H1 (cell line): ENCODE measurements at regions of chr2 and their contacts with region 1.

Region 1: GRCh38 chr2:96116879-96117697 is 717 bp upstream of the ADRA2B start:
- DNase-seq: no peak
- H3K4me3 ChIP-seq: peak overlapping the region; percentile 57 to 81 (median 60)
- H3K27ac ChIP-seq: no peak overlapping the region; the same call in 1 of the 2 replicates
- H3K4me1 ChIP-seq: peaks cover 0 to 20% (median 12%) of the 10 kb centered on the region in 4 experiments; a peak in 6 of 7 replicates
- H3K27me3 ChIP-seq: peaks cover 0 to 32% (median 25%) of the 10 kb centered on the region in 4 experiments; a peak in 5 of 7 replicates
- CTCF ChIP-seq: peak in 2 of 3 experiments; percentile 81 to 95; a peak in 3 of 4 replicates
- EP300 ChIP-seq: no peak
- POLR2A ChIP-seq: no peak
- RAD21 ChIP-seq: peak; percentile 57 to 86

Region 2: GRCh38 chr2:96024336-96025193 is 92.5 kb before region 1 on chr2:
- CTCF ChIA-PET with region 1: interaction called, 22 read pairs
- POLR2A ChIA-PET with region 1: no interaction called
- DNase-seq: no peak
- H3K4me3 ChIP-seq: no peak overlapping the region
- H3K27ac ChIP-seq: no peak overlapping the region
- H3K4me1 ChIP-seq: no peaks in the 10 kb centered on the region
- H3K27me3 ChIP-seq: no peaks in the 10 kb centered on the region
- CTCF ChIP-seq: peak in 2 of 3 experiments; percentile 19 to 20; a peak in 3 of 4 replicates
- EP300 ChIP-seq: no peak
- POLR2A ChIP-seq: no peak
- RAD21 ChIP-seq: 0 out of 4 replicates have a peak, but pooled peaks of 1 of the 2 experiments have one; percentile 7

Region 3: DNA sequence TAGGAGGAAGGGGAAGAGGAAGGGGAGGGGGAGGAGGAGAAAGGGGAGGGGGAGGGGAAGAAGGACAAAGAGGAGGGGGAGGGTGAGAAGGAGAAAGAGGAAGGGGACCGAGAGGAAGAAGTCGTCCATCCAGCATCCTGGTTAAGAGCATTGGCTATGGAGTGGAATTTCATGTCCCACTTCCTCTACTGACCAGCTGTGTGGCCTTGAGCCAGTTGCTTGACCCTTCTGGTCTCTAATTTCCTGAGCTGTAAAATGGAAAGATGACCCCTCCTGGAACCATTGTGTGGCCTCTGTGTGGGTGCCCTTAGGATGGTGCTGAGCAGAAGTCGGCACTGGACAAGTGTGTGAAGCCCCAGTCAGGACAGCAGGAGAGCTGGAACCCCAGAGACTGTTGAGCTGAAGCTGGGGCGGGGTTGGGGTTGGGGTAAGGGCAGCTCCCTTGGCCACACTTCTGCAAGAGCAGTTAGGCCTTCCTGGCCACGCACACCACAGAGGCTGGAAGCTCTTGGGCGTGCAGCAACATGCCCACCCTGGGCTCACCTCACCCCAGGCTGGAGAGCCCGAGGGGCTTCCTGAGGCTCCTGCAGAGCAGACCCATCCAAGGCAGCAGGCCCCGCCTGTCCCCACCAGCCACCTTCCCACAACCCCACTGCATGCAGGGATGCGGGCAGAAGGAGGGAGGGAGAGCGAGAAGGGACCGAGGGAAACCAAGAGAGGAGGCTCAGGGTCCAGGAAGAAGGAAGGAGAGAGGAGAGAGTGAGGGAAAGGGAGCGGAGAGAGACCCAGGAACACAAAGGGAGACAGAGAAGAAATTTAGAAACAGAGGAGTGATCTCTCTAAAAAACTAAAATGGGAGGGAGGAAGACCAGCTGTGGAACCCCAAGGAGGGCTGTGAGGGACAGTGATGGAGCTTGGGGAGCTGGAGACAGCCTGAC is 17.0 kb before region 1 on chr2:
- CTCF ChIA-PET with region 1: interaction called, 61 read pairs
- POLR2A ChIA-PET with region 1: interaction called, 3 read pairs
- DNase-seq: peak in 1 of 2 experiments; percentile 50
- H3K4me3 ChIP-seq: no peak overlapping the region
- H3K27ac ChIP-seq: no peak overlapping the region
- H3K4me1 ChIP-seq: peaks cover 0 to 9% (median 3%) of the 10 kb centered on the region in 4 experiments; a peak in 4 of 7 replicates
- H3K27me3 ChIP-seq: no peaks in the 10 kb centered on the region
- CTCF ChIP-seq: no peak
- EP300 ChIP-seq: no peak
- POLR2A ChIP-seq: no peak
- RAD21 ChIP-seq: no peak

Region 4: GRCh38 chr2:96145036-96145847 is 28.2 kb after region 1 on chr2 and contains the start of gene DUSP2:
- CTCF ChIA-PET with region 1: interaction called, 12 read pairs
- POLR2A ChIA-PET with region 1: interaction called, 3 read pairs
- DNase-seq: peak in 1 of 2 experiments; percentile 81
- H3K4me3 ChIP-seq: peak within 1 kb of the TSS; percentile 38 to 69 (median 41)
- H3K27ac ChIP-seq: no peak within 1 kb of the TSS
- H3K4me1 ChIP-seq: peaks cover 0 to 42% (median 30%) of the 10 kb centered on the region in 4 experiments; a peak in 6 of 7 replicates
- H3K27me3 ChIP-seq: peaks cover 4 to 30% (median 20%) of the 10 kb centered on the region in 4 experiments; a peak in 6 of 7 replicates
- CTCF ChIP-seq: peak in 1 of 3 experiments; percentile 1; a peak in 1 of 4 replicates
- EP300 ChIP-seq: no peak
- POLR2A ChIP-seq: peak in 1 of 2 experiments; percentile 73; a peak in 2 of 3 replicates
- RAD21 ChIP-seq: no peak
- total RNA-seq, gene DUSP2: 8.7 and 10.1 TPM in 2 replicates

Region 5: GRCh38 chr2:96152301-96153165 is 35.4 kb after region 1 on chr2:
- CTCF ChIA-PET with region 1: interaction called, 12 read pairs
- POLR2A ChIA-PET with region 1: interaction called, 3 read pairs
- DNase-seq: no peak
- H3K4me3 ChIP-seq: no peak overlapping the region
- H3K27ac ChIP-seq: peak overlapping the region; percentile 44; the same call in 1 of the 2 replicates
- H3K4me1 ChIP-seq: peaks cover 0 to 31% (median 19%) of the 10 kb centered on the region in 4 experiments; a peak in 6 of 7 replicates
- H3K27me3 ChIP-seq: no peaks in the 10 kb centered on the region; a peak in 1 of 7 replicates
- CTCF ChIP-seq: no peak
- EP300 ChIP-seq: no peak
- POLR2A ChIP-seq: no peak
- RAD21 ChIP-seq: no peak

Region 6: GRCh38 chr2:96195410-96196066 is 78.5 kb after region 1 on chr2:
- CTCF ChIA-PET with region 1: no interaction called
- POLR2A ChIA-PET with region 1: no interaction called
- DNase-seq: no peak
- H3K4me3 ChIP-seq: no peak overlapping the region
- H3K27ac ChIP-seq: no peak overlapping the region
- H3K4me1 ChIP-seq: no peaks in the 10 kb centered on the region
- H3K27me3 ChIP-seq: no peaks in the 10 kb centered on the region
- CTCF ChIP-seq: no peak
- EP300 ChIP-seq: no peak
- POLR2A ChIP-seq: no peak
- RAD21 ChIP-seq: no peak

Region 7: GRCh38 chr2:96531872-96532704 is 415.0 kb after region 1 on chr2:
- CTCF ChIA-PET with region 1: no interaction called
- POLR2A ChIA-PET with region 1: no interaction called
- DNase-seq: no peak
- H3K4me3 ChIP-seq: peak overlapping the region; percentile 22 to 58 (median 48)
- H3K27ac ChIP-seq: no peak overlapping the region
- H3K4me1 ChIP-seq: peaks cover 2 to 3% (median 3%) of the 10 kb centered on the region in 4 experiments
- H3K27me3 ChIP-seq: peaks cover 0 to 18% (median 12%) of the 10 kb centered on the region in 4 experiments; a peak in 6 of 7 replicates
- CTCF ChIP-seq: no peak
- EP300 ChIP-seq: no peak
- POLR2A ChIP-seq: no peak
- RAD21 ChIP-seq: no peak